Aorta (tissue), 5 donors: ENCODE measurements at regions of chr7 and their contacts with region 1.

Region 1: DNA sequence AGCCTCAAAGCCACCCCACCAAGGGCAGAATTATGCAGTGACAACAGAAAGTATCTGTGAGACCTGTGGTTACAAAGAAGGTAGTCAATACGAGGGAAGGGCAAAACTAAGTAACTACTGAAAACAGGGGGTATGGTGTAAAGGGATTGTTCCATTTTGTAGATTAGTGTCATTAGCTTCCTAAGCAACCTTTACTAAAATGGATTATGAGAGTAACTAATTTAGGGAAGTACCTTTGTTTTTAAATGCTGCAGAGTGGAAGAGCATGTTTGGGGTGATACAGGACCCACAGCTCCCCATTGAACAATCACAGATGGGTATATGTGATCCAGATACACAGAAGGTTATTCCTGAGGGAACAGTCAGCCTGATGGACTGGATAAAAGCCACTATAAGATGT is 51.3 kb upstream of the TAC1 start:
- DNase-seq: no peak
- ATAC-seq: no peak
- H3K4me3 ChIP-seq: no peak overlapping the region
- H3K27ac ChIP-seq: no peak overlapping the region
- H3K4me1 ChIP-seq: no peaks in the 10 kb centered on the region
- H3K27me3 ChIP-seq: no peaks in the 10 kb centered on the region

Region 2: DNA sequence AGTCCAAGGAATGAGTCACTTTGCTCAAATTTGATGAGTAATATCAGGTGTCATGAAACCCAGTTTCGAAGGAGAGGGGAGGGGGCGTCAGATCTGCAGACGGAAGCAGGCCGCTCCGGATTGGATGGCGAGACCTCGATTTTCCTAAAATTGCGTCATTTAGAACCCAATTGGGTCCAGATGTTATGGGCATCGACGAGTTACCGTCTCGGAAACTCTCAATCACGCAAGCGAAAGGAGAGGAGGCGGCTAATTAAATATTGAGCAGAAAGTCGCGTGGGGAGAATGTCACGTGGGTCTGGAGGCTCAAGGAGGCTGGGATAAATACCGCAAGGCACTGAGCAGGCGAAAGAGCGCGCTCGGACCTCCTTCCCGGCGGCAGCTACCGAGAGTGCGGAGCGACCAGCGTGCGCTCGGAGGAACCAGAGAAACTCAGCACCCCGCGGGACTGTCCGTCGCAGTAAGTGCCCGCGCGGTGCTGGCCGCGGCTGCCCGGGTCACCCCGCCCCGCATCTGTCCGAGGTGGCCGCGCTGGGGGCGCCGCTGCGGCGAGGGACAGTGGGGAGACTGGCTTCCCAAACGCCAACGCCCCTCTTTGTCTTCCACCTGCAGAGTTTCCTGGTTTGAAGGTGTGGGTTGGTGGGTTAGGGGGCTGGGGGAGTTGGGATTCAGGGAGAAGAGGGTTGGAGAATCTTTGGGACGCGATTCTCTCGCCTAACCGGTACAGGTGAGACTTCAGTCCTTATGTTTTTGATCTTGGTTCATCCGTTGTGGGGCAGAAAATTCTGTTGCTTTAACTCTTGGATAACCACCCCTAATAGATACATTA is 51.3 kb after region 1 on chr7 and contains the start of gene TAC1:
- intact Hi-C with region 1: loop called in 1 of 2 experiments (anchors 2 kb)
- DNase-seq: peak in 1 of 2 donors; percentile 43
- ATAC-seq: peak; percentile 49
- H3K4me3 ChIP-seq: peak within 1 kb of the TSS; percentile 11
- H3K27ac ChIP-seq: no peak within 1 kb of the TSS
- H3K4me1 ChIP-seq: no peaks in the 10 kb centered on the region
- H3K27me3 ChIP-seq: no peaks in the 10 kb centered on the region
- total RNA-seq, gene TAC1: 1.2 TPM in 1 of 2 donors, not detected in the other